B cell (primary cell): ENCODE measurements at regions of chr13 and their contacts with region 1.

Region 1: DNA sequence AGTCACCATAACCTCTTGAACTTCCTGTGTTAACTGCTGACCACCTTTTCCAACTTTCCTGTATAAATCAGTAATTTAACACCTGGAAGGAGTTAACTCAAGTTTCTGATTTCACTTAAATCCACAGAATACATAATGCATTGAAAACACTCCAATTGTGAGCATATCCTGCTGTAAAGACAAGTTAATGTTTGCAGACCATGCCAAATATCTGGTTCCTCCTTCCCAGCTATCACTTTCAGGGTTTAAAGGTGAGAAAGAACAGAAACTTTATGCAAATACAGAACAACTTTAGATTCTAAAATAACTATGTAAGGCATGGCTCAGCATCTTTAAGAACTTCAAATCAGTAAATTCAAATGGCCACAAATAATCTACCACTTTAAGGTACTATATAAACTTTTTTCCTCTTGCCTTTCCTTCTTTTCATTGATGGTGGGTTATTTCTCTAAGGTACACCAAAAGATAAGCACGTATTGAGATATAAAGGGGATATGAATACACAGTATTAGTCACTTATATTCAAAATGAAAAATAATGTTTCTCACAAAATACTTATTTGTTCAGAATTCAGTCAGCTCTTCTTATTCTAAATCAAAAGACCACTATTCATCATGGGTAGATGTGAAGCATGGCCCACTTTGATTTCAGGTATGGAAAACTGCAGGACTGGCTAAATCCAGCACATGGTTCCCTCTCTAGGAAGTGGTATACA is 6.6 kb upstream of the TPTE2 start:
- DNase-seq: no peak
- ATAC-seq: no peak
- H3K4me3 ChIP-seq: no peak overlapping the region
- H3K4me3 Mint-ChIP-seq: no peak overlapping the region
- H3K27ac ChIP-seq: no peak overlapping the region
- H3K27ac Mint-ChIP-seq: no peak overlapping the region
- H3K4me1 ChIP-seq: peaks cover 0 to 5% of the 10 kb centered on the region in 2 donors
- H3K4me1 Mint-ChIP-seq: peaks cover 16% of the 10 kb centered on the region
- H3K27me3 ChIP-seq: no peaks in the 10 kb centered on the region
- H3K27me3 Mint-ChIP-seq: peaks cover 10% of the 10 kb centered on the region
- CTCF ChIP-seq: no peak

Region 2: DNA sequence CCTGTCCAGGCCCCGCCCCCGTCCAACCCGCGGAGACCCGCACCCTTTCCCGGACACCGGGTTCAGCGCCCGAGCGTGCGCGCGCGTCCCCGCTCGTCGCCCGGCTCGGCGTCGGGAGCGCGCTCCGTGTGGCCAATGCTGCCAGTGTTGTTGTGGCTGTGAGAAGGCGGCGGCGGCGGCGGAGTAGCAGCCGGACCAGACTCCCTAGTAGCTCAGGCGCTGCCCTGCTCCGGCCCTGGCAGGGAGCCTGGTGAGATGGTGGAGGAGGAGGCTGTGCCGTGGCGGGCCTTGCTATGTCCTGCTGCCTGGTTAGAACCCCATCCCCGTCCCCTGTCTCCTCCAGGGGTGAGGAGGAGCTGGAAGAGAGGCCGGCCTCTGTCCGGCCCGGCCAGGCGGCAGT is 939.6 kb before region 1 on chr13:
- CTCF ChIA-PET with region 1: no interaction called
- POLR2A ChIA-PET with region 1: no interaction called
- intact Hi-C with region 1: no loop called
- DNase-seq: no peak
- ATAC-seq: no peak
- H3K4me3 ChIP-seq: no peak overlapping the region
- H3K4me3 Mint-ChIP-seq: no peak overlapping the region
- H3K27ac ChIP-seq: no peak overlapping the region
- H3K27ac Mint-ChIP-seq: no peak overlapping the region
- H3K4me1 ChIP-seq: no peaks in the 10 kb centered on the region
- H3K4me1 Mint-ChIP-seq: no peaks in the 10 kb centered on the region
- H3K27me3 ChIP-seq: no peaks in the 10 kb centered on the region
- H3K27me3 Mint-ChIP-seq: no peaks in the 10 kb centered on the region
- CTCF ChIP-seq: no peak

Region 3: DNA sequence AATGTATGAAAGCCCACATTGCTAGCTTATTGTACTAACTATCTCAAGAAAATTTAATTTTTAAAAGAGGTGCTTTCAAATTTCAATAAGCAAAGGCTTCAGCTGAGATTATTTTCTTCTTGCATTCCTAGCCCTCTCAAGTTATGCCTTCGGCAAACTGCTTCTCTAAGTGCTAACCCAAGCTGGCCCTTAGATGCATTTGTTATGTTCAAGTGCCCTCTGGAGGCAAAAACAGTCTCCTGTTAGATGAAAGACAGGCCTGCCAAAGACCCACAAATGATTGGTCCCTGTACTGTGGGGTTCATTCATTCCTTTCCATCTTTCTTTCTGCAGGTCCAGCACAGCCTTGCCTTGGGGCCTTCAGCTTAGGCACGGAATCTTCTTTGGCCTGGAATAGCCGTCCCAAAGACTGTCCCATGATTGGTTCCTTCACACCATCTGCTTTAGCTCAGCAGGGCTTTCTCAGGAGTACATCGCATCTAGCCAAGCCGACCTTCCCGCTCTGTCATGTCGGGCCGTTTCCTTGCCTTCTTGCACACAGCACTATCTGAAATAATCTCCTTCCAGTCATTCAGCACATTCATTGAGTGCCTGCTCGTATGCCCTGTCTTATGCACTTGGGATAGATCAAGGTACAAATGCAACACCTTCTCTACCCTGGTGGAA is 19.8 kb after region 1 on chr13:
- CTCF ChIA-PET with region 1: interaction called, 3 read pairs
- POLR2A ChIA-PET with region 1: no interaction called
- intact Hi-C with region 1: loop called (anchors 1 kb)
- DNase-seq: peak; percentile 39
- ATAC-seq: peak; percentile 44
- H3K4me3 ChIP-seq: peak overlapping the region in 1 of 5 experiments; percentile 67
- H3K4me3 Mint-ChIP-seq: peak overlapping the region; percentile 82
- H3K27ac ChIP-seq: no peak overlapping the region
- H3K27ac Mint-ChIP-seq: peak overlapping the region; percentile 75
- H3K4me1 ChIP-seq: peaks cover 17 to 18% of the 10 kb centered on the region in 2 donors
- H3K4me1 Mint-ChIP-seq: peaks cover 23% of the 10 kb centered on the region
- H3K27me3 ChIP-seq: peaks cover 0 to 4% (median 3%) of the 10 kb centered on the region in 4 experiments
- H3K27me3 Mint-ChIP-seq: peaks cover 14% of the 10 kb centered on the region
- CTCF ChIP-seq: no peak

Region 4: GRCh38 chr13:19845758-19846157 is 277.8 kb after region 1 on chr13:
- CTCF ChIA-PET with region 1: no interaction called
- POLR2A ChIA-PET with region 1: no interaction called
- intact Hi-C with region 1: no loop called
- DNase-seq: no peak
- ATAC-seq: no peak
- H3K4me3 ChIP-seq: no peak overlapping the region
- H3K4me3 Mint-ChIP-seq: no peak overlapping the region
- H3K27ac ChIP-seq: no peak overlapping the region
- H3K27ac Mint-ChIP-seq: no peak overlapping the region
- H3K4me1 ChIP-seq: no peaks in the 10 kb centered on the region
- H3K4me1 Mint-ChIP-seq: peaks cover 7% of the 10 kb centered on the region
- H3K27me3 ChIP-seq: no peaks in the 10 kb centered on the region
- H3K27me3 Mint-ChIP-seq: no peaks in the 10 kb centered on the region
- CTCF ChIP-seq: no peak